HCT116 (cell line): ENCODE measurements at regions of chr3 and their contacts with region 1.

Region 1: GRCh38 chr3:101069901-101070798 is 76.9 kb upstream of the ABI3BP start:
- DNase-seq: peak; percentile 57
- ATAC-seq: peak; percentile 100
- H3K4me3 ChIP-seq: no peak overlapping the region
- H3K27ac ChIP-seq: no peak overlapping the region
- H3K4me1 ChIP-seq: peaks cover 0 to 16% of the 10 kb centered on the region in 2 experiments; a peak in 1 of 4 replicates
- H3K27me3 ChIP-seq: no peaks in the 10 kb centered on the region
- CTCF ChIP-seq: peak; percentile 73 to 95 (median 95); a peak in 5 of 6 replicates
- POLR2A ChIP-seq: no peak
- RAD21 ChIP-seq: peak; percentile 69

Region 2: GRCh38 chr3:100329800-100330489 is 740.2 kb before region 1 on chr3:
- CTCF ChIA-PET with region 1: no interaction called
- POLR2A ChIA-PET with region 1: no interaction called
- RAD21 ChIA-PET with region 1: no interaction called
- intact Hi-C with region 1: no loop called
- DNase-seq: no peak
- ATAC-seq: no peak
- H3K4me3 ChIP-seq: no peak overlapping the region
- H3K27ac ChIP-seq: no peak overlapping the region
- H3K4me1 ChIP-seq: peaks cover 3 to 7% of the 10 kb centered on the region in 2 experiments; a peak in 3 of 4 replicates
- H3K27me3 ChIP-seq: no peaks in the 10 kb centered on the region
- CTCF ChIP-seq: no peak
- POLR2A ChIP-seq: no peak
- RAD21 ChIP-seq: no peak

Region 3: DNA sequence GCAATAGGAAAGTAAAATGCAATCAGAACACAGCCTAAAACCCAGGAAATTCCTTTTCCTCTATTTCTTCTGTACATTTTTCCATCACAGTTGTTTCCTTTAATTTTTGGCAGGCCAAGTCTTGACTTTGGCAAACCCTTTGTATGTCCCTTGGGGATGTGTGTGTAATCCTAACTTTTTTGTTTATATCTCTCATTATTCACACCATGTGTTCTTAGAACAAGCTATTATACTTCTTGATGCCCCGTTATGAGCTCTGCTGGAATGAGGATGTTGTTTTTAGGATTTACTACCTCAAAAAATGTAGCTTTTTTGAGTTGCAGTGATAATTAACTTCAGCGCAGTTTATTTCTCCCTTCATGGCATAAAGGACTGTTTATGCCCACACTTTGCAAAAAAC is 200.4 kb before region 1 on chr3:
- CTCF ChIA-PET with region 1: interaction called, 3 read pairs
- POLR2A ChIA-PET with region 1: no interaction called
- RAD21 ChIA-PET with region 1: no interaction called
- intact Hi-C with region 1: loop called (anchors 5 kb)
- DNase-seq: no peak
- ATAC-seq: no peak
- H3K4me3 ChIP-seq: no peak overlapping the region
- H3K27ac ChIP-seq: no peak overlapping the region
- H3K4me1 ChIP-seq: no peaks in the 10 kb centered on the region
- H3K27me3 ChIP-seq: no peaks in the 10 kb centered on the region
- CTCF ChIP-seq: no peak
- POLR2A ChIP-seq: no peak
- RAD21 ChIP-seq: no peak

Region 4: DNA sequence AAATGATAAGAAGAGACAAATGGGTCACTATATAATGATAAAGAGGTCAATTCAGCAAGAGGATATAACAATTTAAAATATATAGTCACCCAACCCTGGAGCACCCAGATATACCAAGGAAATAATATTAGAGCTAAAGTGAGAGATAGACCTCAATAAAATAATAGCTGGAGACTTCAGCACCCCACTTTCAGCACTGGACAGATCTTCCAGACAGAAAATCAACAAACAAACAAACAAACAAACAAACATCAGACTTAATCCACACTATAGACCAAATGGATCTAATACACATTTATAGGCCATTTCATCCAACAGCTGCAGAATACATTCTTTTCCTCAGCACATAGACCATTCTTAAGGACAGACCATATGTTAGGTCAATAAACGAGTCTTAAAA is 363.5 kb after region 1 on chr3:
- CTCF ChIA-PET with region 1: no interaction called
- POLR2A ChIA-PET with region 1: no interaction called
- RAD21 ChIA-PET with region 1: no interaction called
- intact Hi-C with region 1: no loop called
- DNase-seq: no peak
- ATAC-seq: no peak
- H3K4me3 ChIP-seq: no peak overlapping the region
- H3K27ac ChIP-seq: no peak overlapping the region
- H3K4me1 ChIP-seq: no peaks in the 10 kb centered on the region
- H3K27me3 ChIP-seq: no peaks in the 10 kb centered on the region
- CTCF ChIP-seq: no peak
- POLR2A ChIP-seq: no peak
- RAD21 ChIP-seq: no peak